Mammary epithelial cell (primary cell): ENCODE measurements at regions of chr22 and their contacts with region 1.

Region 1: GRCh38 chr22:41204992-41205900 is at the start of gene L3MBTL2:
- DNase-seq: peak; percentile 95
- H3K4me3 ChIP-seq: peak within 1 kb of the TSS; percentile 37 to 73 (median 61)
- H3K27ac ChIP-seq: peak within 1 kb of the TSS; percentile 78
- H3K4me1 ChIP-seq: peaks cover 5% of the 10 kb centered on the region
- H3K27me3 ChIP-seq: no peaks in the 10 kb centered on the region
- CTCF ChIP-seq: no peak
- total RNA-seq, gene L3MBTL2: 21.0 to 22.2 TPM

Region 2: DNA sequence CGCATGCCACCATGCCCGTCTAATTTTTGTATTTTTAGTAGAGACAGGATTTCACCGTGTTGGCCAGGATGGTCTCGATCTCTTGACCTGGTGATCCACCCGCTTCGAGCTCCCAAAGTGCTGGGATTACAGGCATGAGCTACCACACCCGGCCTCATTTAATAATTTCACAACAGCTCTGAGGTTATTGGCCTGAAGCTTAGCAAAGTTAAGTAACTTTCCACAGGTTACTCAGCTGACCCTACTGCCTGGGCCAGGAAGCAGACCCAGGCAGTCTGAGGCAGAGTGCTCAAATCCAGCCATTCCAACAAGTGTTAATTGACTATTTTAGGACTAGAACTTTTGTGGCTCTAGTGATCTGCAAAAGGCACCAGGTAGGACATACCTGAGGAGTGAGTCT is 52.3 kb before region 1 on chr22:
- CTCF ChIA-PET with region 1: no interaction called
- dilution Hi-C with region 1: loop called (anchors 5 kb)
- in situ Hi-C with region 1: no loop called
- intact Hi-C with region 1: no loop called
- DNase-seq: no peak
- H3K4me3 ChIP-seq: no peak overlapping the region
- H3K27ac ChIP-seq: no peak overlapping the region
- H3K4me1 ChIP-seq: no peaks in the 10 kb centered on the region
- H3K27me3 ChIP-seq: no peaks in the 10 kb centered on the region
- CTCF ChIP-seq: no peak

Region 3: DNA sequence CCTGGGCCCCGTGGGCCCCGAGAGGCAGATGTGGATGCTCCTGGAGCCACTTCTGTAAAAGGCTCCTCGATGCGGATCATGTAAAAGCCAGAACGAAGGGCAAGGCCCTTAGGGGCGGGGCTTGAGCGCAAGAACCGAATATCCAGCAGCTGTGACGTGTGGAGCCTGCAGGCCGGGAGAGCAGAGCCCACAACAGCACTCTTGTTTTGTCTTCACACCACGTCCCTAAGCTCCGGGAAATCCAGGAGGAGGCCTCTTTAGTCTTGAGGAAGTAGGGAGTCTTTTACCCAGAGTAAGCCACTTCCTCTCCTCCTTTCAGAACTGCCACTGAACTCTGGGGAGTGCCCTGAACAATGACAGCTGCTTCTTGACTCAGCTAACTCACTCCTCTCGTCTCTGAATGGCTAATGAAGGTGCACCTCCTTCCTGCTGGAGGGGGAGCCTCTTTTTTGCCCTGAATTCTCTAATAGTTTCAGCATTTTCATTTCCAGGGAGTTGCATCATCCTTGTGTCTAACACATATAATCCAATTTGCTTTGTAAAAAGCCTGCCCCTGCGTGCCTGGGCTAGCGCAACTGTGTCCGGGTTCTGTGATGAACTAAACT is 12.4 kb after region 1 on chr22:
- CTCF ChIA-PET with region 1: no interaction called
- dilution Hi-C with region 1: no loop called
- in situ Hi-C with region 1: no loop called
- intact Hi-C with region 1: loop called (anchors 1 kb)
- DNase-seq: no peak
- H3K4me3 ChIP-seq: no peak overlapping the region
- H3K27ac ChIP-seq: peak overlapping the region; percentile 9
- H3K4me1 ChIP-seq: peaks cover 12% of the 10 kb centered on the region
- H3K27me3 ChIP-seq: no peaks in the 10 kb centered on the region
- CTCF ChIP-seq: no peak

Region 4: DNA sequence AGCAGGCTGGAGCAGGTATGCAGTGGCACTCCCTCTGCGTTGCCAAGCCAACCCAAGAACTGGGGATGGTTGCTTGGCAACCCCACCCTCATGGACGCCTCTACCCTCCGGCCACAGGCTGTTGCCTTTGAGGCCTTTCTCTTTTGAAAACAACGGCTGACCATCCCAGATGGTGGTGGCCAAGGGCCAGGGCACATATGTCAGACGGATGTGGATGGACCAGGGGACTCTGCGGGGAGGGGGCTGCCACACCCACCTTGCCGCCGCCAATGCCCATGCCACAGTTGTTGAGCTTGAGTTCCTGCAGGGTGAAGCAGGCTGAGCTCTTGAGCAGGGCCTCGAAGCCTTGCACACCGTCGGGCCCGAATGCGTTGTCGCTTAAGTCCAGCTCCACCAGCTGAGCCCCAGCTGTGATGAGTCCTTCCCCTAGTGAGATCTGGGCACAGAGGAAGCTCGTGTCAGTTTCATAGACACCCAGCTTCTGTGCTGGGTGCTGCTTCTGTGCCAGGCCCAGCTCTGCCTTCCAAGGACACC is 59.2 kb after region 1 on chr22:
- CTCF ChIA-PET with region 1: no interaction called
- dilution Hi-C with region 1: loop called (anchors 5 kb)
- in situ Hi-C with region 1: no loop called
- intact Hi-C with region 1: no loop called
- DNase-seq: no peak
- H3K4me3 ChIP-seq: no peak overlapping the region
- H3K27ac ChIP-seq: no peak overlapping the region
- H3K4me1 ChIP-seq: no peaks in the 10 kb centered on the region
- H3K27me3 ChIP-seq: no peaks in the 10 kb centered on the region
- CTCF ChIP-seq: no peak

Region 5: GRCh38 chr22:41369837-41370236 is 164.6 kb after region 1 on chr22:
- CTCF ChIA-PET with region 1: no interaction called
- dilution Hi-C with region 1: loop called (anchors 10 kb)
- in situ Hi-C with region 1: no loop called
- intact Hi-C with region 1: no loop called
- DNase-seq: no peak
- H3K4me3 ChIP-seq: no peak overlapping the region
- H3K27ac ChIP-seq: no peak overlapping the region
- H3K4me1 ChIP-seq: peaks cover 20% of the 10 kb centered on the region
- H3K27me3 ChIP-seq: no peaks in the 10 kb centered on the region
- CTCF ChIP-seq: no peak